CD8-positive, alpha-beta memory T cell (primary cell): ENCODE measurements at regions of chr18 and their contacts with region 1.

Region 1: GRCh38 chr18:35343936-35344735 is at the start of gene ZNF24:
- DNase-seq: peak; percentile 86 to 96 (median 89)
- H3K4me3 ChIP-seq: peak within 1 kb of the TSS; percentile 88
- H3K4me3 Mint-ChIP-seq: peak within 1 kb of the TSS; percentile 96 to 99 (median 97)
- H3K27ac ChIP-seq: peak within 1 kb of the TSS; percentile 99
- H3K27ac Mint-ChIP-seq: peak within 1 kb of the TSS; percentile 93 to 99 (median 98)
- H3K4me1 ChIP-seq: peaks cover 36% of the 10 kb centered on the region
- H3K4me1 Mint-ChIP-seq: peaks cover 44 to 61% (median 47%) of the 10 kb centered on the region in 3 donors
- H3K27me3 ChIP-seq: no peaks in the 10 kb centered on the region
- H3K27me3 Mint-ChIP-seq: no peaks in the 10 kb centered on the region
- total RNA-seq, gene ZNF24: 52.1 to 52.6 TPM

Region 2: GRCh38 chr18:35240664-35241447 is 103.3 kb before region 1 on chr18 and contains the start of gene ZNF397:
- CTCF ChIA-PET with region 1: interaction called, 5 read pairs
- POLR2A ChIA-PET with region 1: interaction called, 10 read pairs
- DNase-seq: peak; percentile 91 to 97 (median 94)
- H3K4me3 ChIP-seq: peak within 1 kb of the TSS; percentile 91
- H3K4me3 Mint-ChIP-seq: peak within 1 kb of the TSS; percentile 96 to 100 (median 97)
- H3K27ac ChIP-seq: peak within 1 kb of the TSS; percentile 97
- H3K27ac Mint-ChIP-seq: peak within 1 kb of the TSS; percentile 97 to 100 (median 98)
- H3K4me1 ChIP-seq: peaks cover 18% of the 10 kb centered on the region
- H3K4me1 Mint-ChIP-seq: peaks cover 18 to 36% (median 35%) of the 10 kb centered on the region in 3 donors
- H3K27me3 ChIP-seq: no peaks in the 10 kb centered on the region
- H3K27me3 Mint-ChIP-seq: peaks cover 0 to 2% of the 10 kb centered on the region in 2 donors
- total RNA-seq, gene ZNF397: 20.9 to 22.5 TPM